ENCODE measurements at regions of chr13 and their contacts with region 1.

Region 1: DNA sequence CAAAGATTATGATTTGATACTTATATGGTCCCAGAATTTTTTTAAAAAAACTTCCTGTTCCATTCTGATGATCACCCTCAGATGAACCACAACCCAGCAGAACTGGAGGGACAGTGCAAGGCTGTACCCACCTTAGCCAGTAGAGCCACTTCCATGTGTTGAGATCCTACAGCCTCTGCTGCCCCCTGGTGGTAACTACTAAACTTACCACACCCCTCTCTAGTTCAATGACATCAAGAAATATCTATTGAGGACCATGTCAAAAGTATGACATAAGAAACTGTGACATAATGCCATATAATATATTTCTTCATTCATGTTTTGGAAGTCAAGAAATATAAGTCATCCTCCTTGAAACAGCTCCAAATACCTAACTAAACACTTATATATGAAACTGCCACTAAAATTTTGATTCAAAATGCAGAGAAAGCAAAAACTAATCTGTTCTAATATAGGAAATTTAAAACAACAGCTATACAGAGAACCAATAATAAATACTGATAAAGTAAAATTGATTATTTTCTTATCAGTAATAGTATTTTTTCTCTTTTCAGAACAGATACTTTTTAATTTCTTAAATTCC is 412.6 kb downstream of the KCTD12 start:
- H3K4me3 Mint-ChIP-seq: no peak overlapping the region
- H3K27ac Mint-ChIP-seq: no peak overlapping the region
- H3K4me1 Mint-ChIP-seq: no peaks in the 10 kb centered on the region
- H3K27me3 Mint-ChIP-seq: no peaks in the 10 kb centered on the region

Region 2: GRCh38 chr13:75696746-75697145 is 776.9 kb before region 1 on chr13:
- intact Hi-C with region 1: loop called (anchors 2 kb)
- H3K4me3 Mint-ChIP-seq: no peak overlapping the region
- H3K27ac Mint-ChIP-seq: no peak overlapping the region
- H3K4me1 Mint-ChIP-seq: no peaks in the 10 kb centered on the region
- H3K27me3 Mint-ChIP-seq: no peaks in the 10 kb centered on the region

Region 3: DNA sequence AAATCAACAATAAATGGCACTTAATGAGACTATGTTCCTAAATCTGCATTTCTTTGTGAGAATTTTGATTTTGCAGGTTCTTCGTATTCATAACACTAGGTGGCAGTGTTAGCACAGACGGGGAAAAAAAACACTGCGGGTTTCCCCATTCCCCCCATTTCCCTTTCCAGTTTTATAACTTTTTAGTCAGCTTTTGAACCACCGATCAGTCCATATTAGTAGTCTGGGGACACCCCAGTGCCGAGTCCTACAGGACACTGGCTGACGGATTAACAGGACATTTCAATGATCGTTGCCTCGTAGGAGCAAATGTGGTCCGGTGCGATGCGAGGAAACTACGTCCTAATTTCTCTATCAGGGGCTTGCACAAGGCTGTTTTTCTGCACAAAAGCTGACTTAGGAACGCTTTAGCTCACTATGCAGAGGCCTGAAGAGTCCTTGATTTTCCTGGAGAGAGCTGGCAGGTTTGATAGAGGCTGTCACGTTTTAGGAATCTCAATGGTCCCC is 603.2 kb before region 1 on chr13:
- intact Hi-C with region 1: loop called (anchors 1 kb)
- H3K4me3 Mint-ChIP-seq: peak overlapping the region; percentile 13
- H3K27ac Mint-ChIP-seq: no peak overlapping the region
- H3K4me1 Mint-ChIP-seq: peaks cover 28% of the 10 kb centered on the region
- H3K27me3 Mint-ChIP-seq: peaks cover 19% of the 10 kb centered on the region

Region 4: DNA sequence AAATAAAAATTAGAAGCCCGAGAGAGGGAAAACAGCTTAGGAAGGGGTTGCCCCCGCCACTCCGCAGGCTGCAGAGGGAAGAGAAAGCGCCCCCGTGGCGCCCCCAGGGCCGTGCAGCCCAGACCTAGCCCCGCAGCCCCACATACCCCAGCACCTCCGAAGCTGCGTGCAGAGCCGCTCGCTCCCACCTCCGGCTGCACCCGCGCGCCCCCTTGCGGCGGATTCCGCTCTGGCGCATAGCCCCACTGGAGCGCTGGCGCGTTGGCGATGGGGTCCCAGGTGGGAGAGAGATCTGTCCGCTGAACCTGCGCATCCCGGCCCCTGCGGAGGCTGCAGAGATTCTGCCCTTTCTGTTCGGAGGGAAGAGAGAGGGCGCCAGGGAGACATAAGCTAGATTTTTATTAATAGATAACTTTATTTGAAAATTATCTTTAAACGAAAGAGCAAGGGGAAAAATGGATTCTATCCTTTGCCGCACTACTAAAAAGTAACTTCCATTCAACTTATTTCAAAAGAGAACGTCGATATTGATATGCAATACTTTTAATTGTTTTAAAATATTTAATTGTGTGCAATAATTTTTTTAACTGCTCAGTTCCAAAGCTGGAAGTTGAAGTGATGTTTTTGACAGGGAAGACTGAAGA is 506.6 kb after region 1 on chr13:
- intact Hi-C with region 1: loop called (anchors 10 kb)
- H3K4me3 Mint-ChIP-seq: peak overlapping the region; percentile 40
- H3K27ac Mint-ChIP-seq: no peak overlapping the region
- H3K4me1 Mint-ChIP-seq: peaks cover 5% of the 10 kb centered on the region
- H3K27me3 Mint-ChIP-seq: peaks cover 33% of the 10 kb centered on the region